ENCODE measurements at regions of chr5 and their contacts with region 1.

Region 1: DNA sequence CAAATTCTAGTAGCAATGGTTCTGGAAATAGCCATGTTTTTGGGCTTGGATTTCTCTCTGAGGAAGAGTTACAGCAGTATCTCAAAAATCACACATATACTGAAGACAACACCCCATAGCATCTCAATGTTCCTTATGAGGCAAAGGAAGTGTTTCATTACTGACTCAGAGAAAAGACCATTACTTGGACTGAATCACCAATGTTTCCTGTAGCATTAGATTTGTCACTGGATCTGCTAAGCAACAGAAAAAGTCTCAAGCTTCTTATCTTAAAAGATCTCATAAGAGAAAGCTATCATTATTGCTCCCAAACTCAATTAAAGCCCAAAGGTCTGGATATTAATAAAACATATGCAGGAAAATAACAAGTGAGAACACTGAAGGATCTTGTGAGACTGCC is 272.4 kb downstream of the ADAMTS6 start:
- DNase-seq: peak; percentile 90
- H3K4me3 ChIP-seq: peak overlapping the region in 1 of 3 experiments; percentile 2
- H3K27ac ChIP-seq: peak overlapping the region; percentile 97
- H3K4me1 ChIP-seq: peaks cover 35% of the 10 kb centered on the region
- H3K27me3 ChIP-seq: no peaks in the 10 kb centered on the region
- CTCF ChIP-seq: no peak
- POLR2A ChIP-seq: no peak

Region 2: GRCh38 chr5:64887910-64888309 is 321.4 kb before region 1 on chr5:
- CTCF ChIA-PET with region 1: no interaction called
- POLR2A ChIA-PET with region 1: no interaction called
- dilution Hi-C with region 1: no loop called
- intact Hi-C with region 1: no loop called
- DNase-seq: no peak
- H3K4me3 ChIP-seq: no peak overlapping the region
- H3K27ac ChIP-seq: no peak overlapping the region
- H3K4me1 ChIP-seq: no peaks in the 10 kb centered on the region
- H3K27me3 ChIP-seq: no peaks in the 10 kb centered on the region
- CTCF ChIP-seq: no peak
- POLR2A ChIP-seq: no peak

Region 3: DNA sequence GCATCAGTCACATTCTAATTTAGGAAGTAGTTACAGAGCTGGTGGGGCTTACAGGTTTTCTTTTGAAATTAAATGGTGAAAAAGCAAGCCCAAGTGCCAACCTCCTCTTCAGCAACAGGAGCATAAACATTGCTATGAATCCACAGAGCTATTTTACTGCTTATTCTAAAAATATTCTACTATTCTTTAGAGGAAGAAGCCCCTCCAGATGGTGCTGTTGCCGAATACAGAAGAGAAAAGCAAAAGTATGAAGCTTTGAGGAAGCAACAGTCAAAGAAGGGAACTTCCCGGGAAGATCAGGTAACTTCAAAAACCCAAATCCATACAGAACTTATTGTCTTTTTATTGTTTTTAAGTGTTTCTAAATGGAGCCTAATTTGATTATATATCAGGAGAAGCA is 237.8 kb before region 1 on chr5:
- CTCF ChIA-PET with region 1: no interaction called
- POLR2A ChIA-PET with region 1: no interaction called
- dilution Hi-C with region 1: no loop called
- intact Hi-C with region 1: no loop called
- DNase-seq: peak; percentile 3
- H3K4me3 ChIP-seq: no peak overlapping the region
- H3K27ac ChIP-seq: no peak overlapping the region
- H3K4me1 ChIP-seq: no peaks in the 10 kb centered on the region
- H3K27me3 ChIP-seq: no peaks in the 10 kb centered on the region
- CTCF ChIP-seq: no peak
- POLR2A ChIP-seq: no peak

Region 4: GRCh38 chr5:64987768-64988167 is 221.6 kb before region 1 on chr5:
- CTCF ChIA-PET with region 1: no interaction called
- POLR2A ChIA-PET with region 1: no interaction called
- dilution Hi-C with region 1: no loop called
- intact Hi-C with region 1: no loop called
- DNase-seq: no peak
- H3K4me3 ChIP-seq: no peak overlapping the region
- H3K27ac ChIP-seq: no peak overlapping the region
- H3K4me1 ChIP-seq: no peaks in the 10 kb centered on the region
- H3K27me3 ChIP-seq: no peaks in the 10 kb centered on the region
- CTCF ChIP-seq: no peak
- POLR2A ChIP-seq: no peak

Region 5: DNA sequence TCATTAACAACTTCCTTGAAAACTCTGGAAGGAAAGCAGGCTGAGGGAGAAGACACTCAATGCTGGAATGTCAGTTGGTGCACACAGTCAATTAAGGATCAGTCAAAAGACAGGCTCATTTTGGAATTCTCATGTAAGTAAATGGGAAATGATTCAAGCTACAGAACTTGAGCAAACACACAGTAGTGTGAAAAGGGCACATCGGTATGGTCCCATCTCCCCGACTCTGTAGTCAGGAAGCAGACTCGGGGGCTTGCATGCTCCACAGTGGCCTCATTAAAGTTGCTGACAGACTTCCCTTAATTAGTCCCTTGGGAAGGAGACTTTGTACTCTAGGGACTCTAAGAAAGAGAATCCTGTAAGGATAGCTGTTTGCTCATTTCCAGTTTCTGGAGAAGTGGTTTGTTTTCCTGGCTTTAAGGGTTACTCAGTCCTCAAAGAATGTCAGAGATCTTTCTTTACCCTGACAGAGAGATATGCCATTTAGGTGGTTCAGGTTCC is 66.8 kb before region 1 on chr5:
- CTCF ChIA-PET with region 1: no interaction called
- POLR2A ChIA-PET with region 1: no interaction called
- dilution Hi-C with region 1: no loop called
- intact Hi-C with region 1: loop called (anchors 2 kb)
- DNase-seq: peak; percentile 68
- H3K4me3 ChIP-seq: peak overlapping the region in 1 of 3 experiments; percentile 34
- H3K27ac ChIP-seq: peak overlapping the region; percentile 80
- H3K4me1 ChIP-seq: peaks cover 41% of the 10 kb centered on the region
- H3K27me3 ChIP-seq: no peaks in the 10 kb centered on the region
- CTCF ChIP-seq: no peak
- POLR2A ChIP-seq: no peak